ENCODE measurements at regions of chr17 and their contacts with region 1.

Region 1: GRCh38 chr17:63262751-63263476 is 183.2 kb downstream of the CYB561 start:
- DNase-seq: no peak
- H3K4me3 ChIP-seq: no peak overlapping the region
- H3K27ac ChIP-seq: no peak overlapping the region; a peak in 1 of 4 replicates
- H3K4me1 ChIP-seq: peaks cover 0 to 2% of the 10 kb centered on the region in 2 experiments; a peak in 3 of 4 replicates
- H3K27me3 ChIP-seq: no peaks in the 10 kb centered on the region
- CTCF ChIP-seq: no peak
- EP300 ChIP-seq: no peak
- RAD21 ChIP-seq: no peak

Region 2: GRCh38 chr17:63203652-63204051 is 59.3 kb before region 1 on chr17:
- CTCF ChIA-PET with region 1: no interaction called
- POLR2A ChIA-PET with region 1: no interaction called
- DNase-seq: no peak
- H3K4me3 ChIP-seq: no peak overlapping the region; a peak in 1 of 4 replicates
- H3K27ac ChIP-seq: no peak overlapping the region
- H3K4me1 ChIP-seq: no peaks in the 10 kb centered on the region
- H3K27me3 ChIP-seq: no peaks in the 10 kb centered on the region
- CTCF ChIP-seq: no peak
- EP300 ChIP-seq: no peak
- RAD21 ChIP-seq: no peak

Region 3: GRCh38 chr17:63275318-63275970 is 12.5 kb after region 1 on chr17:
- CTCF ChIA-PET with region 1: interaction called, 11 read pairs
- POLR2A ChIA-PET with region 1: no interaction called
- DNase-seq: no peak
- H3K4me3 ChIP-seq: no peak overlapping the region
- H3K27ac ChIP-seq: peak overlapping the region; percentile 26 to 97; a peak in 3 of 4 replicates
- H3K4me1 ChIP-seq: peaks cover 0 to 60% of the 10 kb centered on the region in 2 experiments; a peak in 3 of 4 replicates
- H3K27me3 ChIP-seq: no peaks in the 10 kb centered on the region
- CTCF ChIP-seq: no peak
- EP300 ChIP-seq: peak; percentile 71 to 99
- RAD21 ChIP-seq: no peak

Measured in SK-N-SH (cell line).